ENCODE measurements at regions of chr2 and their contacts with region 1.

Region 1: DNA sequence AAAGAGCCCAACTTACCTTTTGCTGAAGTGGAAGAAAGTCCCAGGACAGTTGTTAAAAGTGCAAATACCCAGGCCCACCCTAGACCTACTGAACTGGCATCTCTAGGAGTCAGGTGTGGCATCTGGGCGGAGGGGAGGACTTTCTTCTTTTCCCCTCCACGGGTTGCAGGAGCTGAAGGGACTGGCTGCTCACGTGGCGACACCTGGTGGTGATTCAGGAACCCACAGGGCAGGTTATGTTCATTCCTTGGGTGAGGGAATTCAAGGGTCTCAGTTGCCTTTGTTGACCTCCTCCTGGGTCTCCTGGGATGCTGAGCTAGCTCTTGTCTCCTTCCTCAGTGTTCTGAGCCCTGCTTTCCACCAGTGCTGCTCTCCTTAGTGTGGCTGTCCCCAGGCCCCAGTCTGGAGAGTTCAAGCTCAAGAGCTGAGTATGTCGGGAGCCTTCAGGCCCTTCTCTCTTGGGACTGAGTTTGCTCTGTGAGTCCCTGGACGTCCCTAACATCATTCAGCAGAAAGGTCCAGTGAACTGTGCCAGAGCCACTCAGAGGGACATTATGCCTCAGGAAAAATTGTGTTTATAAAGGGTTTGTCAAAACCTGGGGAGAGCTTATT is 56.9 kb downstream of the DYSF start:
- DNase-seq: peak in 1 of 2 donors; percentile 83
- H3K4me3 ChIP-seq: no peak overlapping the region
- H3K27ac ChIP-seq: no peak overlapping the region
- H3K4me1 ChIP-seq: no peaks in the 10 kb centered on the region
- H3K27me3 ChIP-seq: no peaks in the 10 kb centered on the region
- CTCF ChIP-seq: peak; percentile 76 to 91 (median 86)

Region 2: DNA sequence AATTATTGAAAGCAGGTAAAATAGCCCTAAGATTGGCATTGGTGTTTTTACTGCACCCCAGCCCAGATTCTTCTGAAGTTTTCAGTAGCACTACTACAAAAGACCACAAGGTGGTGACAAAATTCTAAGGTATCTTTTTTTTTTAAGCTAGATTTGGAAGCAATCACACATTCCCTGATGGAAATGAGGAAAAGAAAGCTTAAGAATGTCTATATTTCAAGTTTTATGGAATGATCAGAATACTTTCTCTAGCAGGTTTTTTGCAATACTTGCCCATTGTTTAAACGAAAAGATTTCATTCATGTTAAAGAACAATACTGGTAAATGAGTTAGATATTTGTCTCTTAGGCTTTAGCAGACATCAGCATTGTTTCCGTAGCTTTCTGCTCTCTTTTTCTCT is 210.8 kb before region 1 on chr2:
- intact Hi-C with region 1: loop called (anchors 1 kb)
- DNase-seq: no peak
- H3K4me3 ChIP-seq: no peak overlapping the region
- H3K27ac ChIP-seq: no peak overlapping the region
- H3K4me1 ChIP-seq: no peaks in the 10 kb centered on the region
- H3K27me3 ChIP-seq: no peaks in the 10 kb centered on the region
- CTCF ChIP-seq: peak; percentile 28 to 77 (median 63)

Region 3: DNA sequence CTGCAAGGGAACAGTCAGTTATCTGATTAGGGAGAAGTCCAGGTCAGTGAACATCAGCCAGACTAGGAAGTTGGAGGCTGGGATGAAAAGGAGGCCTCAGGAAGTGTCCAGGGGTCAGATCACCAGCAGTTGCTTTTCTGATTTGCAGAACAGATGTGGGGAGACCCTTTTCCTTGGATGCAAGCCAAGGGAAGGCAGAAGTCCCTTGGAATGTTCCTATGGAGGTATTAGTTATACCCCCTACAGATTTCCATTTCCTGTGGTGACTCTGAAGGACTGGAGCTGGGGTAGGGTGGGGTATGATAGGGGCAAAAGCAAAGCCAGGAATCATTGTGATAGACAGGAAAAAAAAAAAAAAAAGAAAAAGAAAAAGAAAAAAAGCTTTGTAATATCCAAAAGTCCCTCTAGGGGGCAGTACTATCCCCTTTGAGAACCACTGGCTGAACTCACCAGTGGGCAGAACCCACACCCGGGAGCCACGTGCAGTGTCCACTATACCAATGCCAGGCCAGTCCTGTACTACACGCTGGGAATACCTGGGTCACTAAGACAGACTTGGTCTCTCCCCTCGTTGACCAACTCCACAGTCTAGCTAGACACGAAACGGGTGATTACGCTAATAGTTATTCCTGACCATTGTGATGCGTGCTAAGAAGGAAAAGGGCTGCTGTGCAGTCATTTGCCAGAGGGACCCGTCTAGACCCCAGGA is 49.6 kb before region 1 on chr2:
- intact Hi-C with region 1: loop called (anchors 1 kb)
- DNase-seq: peak in 1 of 2 donors; percentile 62
- H3K4me3 ChIP-seq: no peak overlapping the region
- H3K27ac ChIP-seq: no peak overlapping the region
- H3K4me1 ChIP-seq: peaks cover 0 to 8% of the 10 kb centered on the region in 2 donors
- H3K27me3 ChIP-seq: no peaks in the 10 kb centered on the region
- CTCF ChIP-seq: peak; percentile 9 to 52 (median 44)

Region 4: DNA sequence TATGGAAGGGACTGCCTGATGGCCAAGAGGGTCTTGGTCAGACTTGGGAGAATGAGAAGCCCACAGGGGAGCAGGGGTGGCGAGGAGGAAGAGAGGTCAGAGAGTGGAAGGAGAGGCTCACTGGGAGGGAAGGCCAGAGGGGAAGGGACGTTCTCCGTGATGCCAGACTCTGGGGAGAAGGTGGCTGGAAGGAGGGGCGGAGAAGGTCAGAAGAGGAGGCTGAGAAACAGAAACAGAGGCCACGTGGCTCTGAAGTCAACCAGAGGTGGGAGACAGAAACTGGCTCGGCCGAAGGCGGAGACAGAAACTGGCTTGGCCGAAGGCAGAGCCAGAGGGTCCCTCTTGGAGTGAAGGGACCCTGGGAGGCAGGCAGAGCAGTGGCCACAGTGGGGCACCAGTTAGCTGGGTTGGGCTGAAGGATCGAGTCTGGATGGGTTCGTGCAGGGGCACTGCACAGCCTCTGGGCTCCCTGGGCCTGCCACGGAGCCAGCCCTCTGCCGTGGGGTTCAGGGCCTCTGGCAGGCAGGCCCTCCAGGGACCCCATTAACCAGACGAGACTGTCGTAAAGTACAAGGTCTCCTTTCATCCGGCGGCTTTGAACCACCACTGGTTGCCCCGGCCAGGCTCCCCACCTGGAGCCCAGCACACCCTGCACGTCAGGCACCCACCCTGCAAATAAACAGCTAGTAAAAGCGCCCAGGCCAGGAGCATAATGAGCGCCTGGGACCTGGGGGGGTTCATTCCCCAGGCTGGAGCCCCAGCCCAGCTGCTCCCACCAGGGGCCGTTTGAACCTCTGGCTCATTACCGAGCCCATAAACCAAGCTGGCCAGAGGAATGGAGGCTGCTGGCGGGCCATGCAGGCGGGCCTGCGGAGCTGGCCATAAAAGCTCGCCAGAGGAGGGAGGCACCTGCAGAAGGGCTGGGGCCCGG is 161.9 kb after region 1 on chr2:
- intact Hi-C with region 1: no loop called
- DNase-seq: peak in 1 of 2 donors; percentile 57
- H3K4me3 ChIP-seq: no peak overlapping the region
- H3K27ac ChIP-seq: no peak overlapping the region
- H3K4me1 ChIP-seq: no peaks in the 10 kb centered on the region
- H3K27me3 ChIP-seq: no peaks in the 10 kb centered on the region
- CTCF ChIP-seq: peak in 2 of 3 experiments; percentile 9 to 16

Measured in ascending aorta (tissue), 2 donors.